ENCODE measurements at regions of chr5 and their contacts with region 1.

Region 1: GRCh38 chr5:125835293-125836172 is 587.7 kb upstream of the GRAMD2B start:
- DNase-seq: peak; percentile 5 to 31
- ATAC-seq: peak in 1 of 2 experiments; percentile 82; a peak in 4 of 6 replicates
- H3K4me3 ChIP-seq: no peak overlapping the region
- H3K27ac ChIP-seq: no peak overlapping the region
- H3K4me1 ChIP-seq: no peaks in the 10 kb centered on the region
- CTCF ChIP-seq: peak; percentile 6; the same call in 1 of the 3 replicates
- EP300 ChIP-seq: no peak
- POLR2A ChIP-seq: no peak
- RAD21 ChIP-seq: peak; percentile 37 to 57

Region 2: GRCh38 chr5:125823572-125823971 is 12.0 kb before region 1 on chr5:
- CTCF ChIA-PET with region 1: interaction called, 10 read pairs
- POLR2A ChIA-PET with region 1: no interaction called
- DNase-seq: no peak
- ATAC-seq: no peak
- H3K4me3 ChIP-seq: no peak overlapping the region
- H3K27ac ChIP-seq: no peak overlapping the region
- H3K4me1 ChIP-seq: no peaks in the 10 kb centered on the region
- CTCF ChIP-seq: no peak
- EP300 ChIP-seq: no peak
- POLR2A ChIP-seq: no peak
- RAD21 ChIP-seq: no peak

Region 3: GRCh38 chr5:125987677-125988255 is 152.2 kb after region 1 on chr5:
- CTCF ChIA-PET with region 1: no interaction called
- POLR2A ChIA-PET with region 1: no interaction called
- DNase-seq: no peak
- ATAC-seq: no peak
- H3K4me3 ChIP-seq: no peak overlapping the region
- H3K27ac ChIP-seq: no peak overlapping the region
- H3K4me1 ChIP-seq: no peaks in the 10 kb centered on the region
- CTCF ChIP-seq: no peak
- EP300 ChIP-seq: no peak
- POLR2A ChIP-seq: no peak
- RAD21 ChIP-seq: no peak

Measured in A549 (cell line).